ENCODE measurements at regions of chr4 and their contacts with region 1.

Region 1: DNA sequence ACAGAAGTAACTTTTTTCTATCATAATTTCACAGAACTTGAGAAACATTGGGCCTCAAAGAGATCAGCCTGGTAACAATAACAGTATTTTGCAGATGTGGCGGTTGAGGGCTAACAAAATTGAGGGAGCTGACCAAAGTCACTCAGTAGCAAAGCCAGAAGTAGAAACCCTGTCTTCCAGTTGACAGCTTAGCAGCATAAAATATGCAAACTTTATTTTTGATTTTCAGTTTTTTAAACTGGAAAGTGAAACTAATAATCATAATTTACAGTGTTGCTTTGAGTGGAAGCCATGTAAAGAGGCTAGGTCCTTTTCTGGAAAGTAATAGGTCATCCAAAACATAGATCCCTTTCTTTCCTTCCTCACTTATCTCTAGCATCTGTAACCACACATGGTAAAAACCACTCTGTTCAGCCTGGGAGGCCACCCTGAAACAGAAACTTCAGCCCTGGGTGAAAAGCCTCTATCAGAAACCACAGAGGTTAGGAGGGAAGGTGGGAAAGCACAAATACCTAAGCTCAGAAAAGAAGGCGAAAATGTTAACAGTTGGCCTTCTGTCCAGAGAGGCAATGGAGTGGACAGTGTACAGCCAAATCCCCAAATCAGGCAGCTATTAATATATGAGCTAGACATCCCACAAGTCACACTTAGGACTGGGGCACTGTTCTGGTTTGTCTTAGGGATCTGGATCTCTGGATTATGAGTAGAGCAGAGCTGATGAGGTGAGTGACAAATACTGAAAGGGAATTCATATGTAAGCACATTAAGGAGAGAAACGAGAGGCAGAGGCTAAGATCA is 61.1 kb upstream of the ARSJ start:
- DNase-seq: no peak
- ATAC-seq: peak; percentile 26
- H3K4me3 Mint-ChIP-seq: no peak overlapping the region
- H3K27ac Mint-ChIP-seq: no peak overlapping the region
- H3K4me1 Mint-ChIP-seq: peaks cover 8% of the 10 kb centered on the region
- H3K27me3 Mint-ChIP-seq: no peaks in the 10 kb centered on the region

Region 2: GRCh38 chr4:113212613-113213012 is 827.9 kb before region 1 on chr4:
- CTCF ChIA-PET with region 1: no interaction called
- POLR2A ChIA-PET with region 1: interaction called, 11 read pairs
- intact Hi-C with region 1: no loop called
- DNase-seq: no peak
- ATAC-seq: no peak
- H3K4me3 Mint-ChIP-seq: no peak overlapping the region
- H3K27ac Mint-ChIP-seq: no peak overlapping the region
- H3K4me1 Mint-ChIP-seq: no peaks in the 10 kb centered on the region
- H3K27me3 Mint-ChIP-seq: peaks cover 2% of the 10 kb centered on the region

Region 3: GRCh38 chr4:113657586-113658233 is 382.8 kb before region 1 on chr4:
- CTCF ChIA-PET with region 1: no interaction called
- POLR2A ChIA-PET with region 1: no interaction called
- intact Hi-C with region 1: no loop called
- DNase-seq: no peak
- ATAC-seq: peak; percentile 64
- H3K4me3 Mint-ChIP-seq: no peak overlapping the region
- H3K27ac Mint-ChIP-seq: peak overlapping the region; percentile 20
- H3K4me1 Mint-ChIP-seq: peaks cover 31% of the 10 kb centered on the region
- H3K27me3 Mint-ChIP-seq: no peaks in the 10 kb centered on the region

Region 4: GRCh38 chr4:114663083-114663482 is 622.6 kb after region 1 on chr4:
- CTCF ChIA-PET with region 1: no interaction called
- POLR2A ChIA-PET with region 1: no interaction called
- intact Hi-C with region 1: no loop called
- DNase-seq: no peak
- ATAC-seq: no peak
- H3K4me3 Mint-ChIP-seq: no peak overlapping the region
- H3K27ac Mint-ChIP-seq: no peak overlapping the region
- H3K4me1 Mint-ChIP-seq: no peaks in the 10 kb centered on the region
- H3K27me3 Mint-ChIP-seq: peaks cover 16% of the 10 kb centered on the region